Heart right ventricle (tissue), 16 donors: ENCODE measurements at regions of chr3 and their contacts with region 1.

Region 1: GRCh38 chr3:36993326-36994283 is at the start of gene MLH1:
- DNase-seq: peak; percentile 95 to 100
- ATAC-seq: peak; percentile 95 to 97 (median 96)
- H3K4me3 ChIP-seq: peak within 1 kb of the TSS; percentile 55 to 87 (median 72)
- H3K27ac ChIP-seq: peak within 1 kb of the TSS; percentile 89 to 99 (median 98)
- H3K4me1 ChIP-seq: peaks cover 2 to 64% (median 51%) of the 10 kb centered on the region in 9 donors
- H3K27me3 ChIP-seq: no peaks in the 10 kb centered on the region
- CTCF ChIP-seq: no peak
- total RNA-seq, gene MLH1: 48.8 to 61.7 (median 52.5) TPM

Region 2: DNA sequence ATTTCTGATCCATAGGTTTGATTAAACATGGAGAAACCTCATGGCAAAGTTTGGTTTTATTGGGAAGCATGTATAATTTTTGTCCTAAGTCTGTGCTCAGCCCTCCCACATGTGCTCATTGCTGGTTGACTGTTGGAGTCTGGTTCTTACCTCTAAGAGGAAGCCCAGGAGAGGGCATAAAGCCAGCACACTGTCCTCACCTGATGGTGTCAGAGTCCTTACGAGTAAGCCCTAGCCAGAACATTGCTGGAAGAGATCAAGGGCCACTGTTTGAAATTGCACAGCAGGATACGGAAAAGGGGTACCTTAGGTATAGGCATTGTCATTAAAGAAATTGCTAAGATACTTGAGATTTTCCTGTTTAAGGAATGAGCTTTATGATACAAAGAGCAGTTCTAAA is 21.0 kb after region 1 on chr3:
- intact Hi-C with region 1: loop called in 1 of 10 experiments (anchors 2 kb)
- DNase-seq: peak; percentile 71 to 81
- ATAC-seq: peak; percentile 62 to 84 (median 80)
- H3K4me3 ChIP-seq: no peak overlapping the region
- H3K27ac ChIP-seq: peak overlapping the region; percentile 42 to 95 (median 80)
- H3K4me1 ChIP-seq: peaks cover 0 to 44% (median 5%) of the 10 kb centered on the region in 9 donors
- H3K27me3 ChIP-seq: no peaks in the 10 kb centered on the region
- CTCF ChIP-seq: no peak

Region 3: GRCh38 chr3:37054370-37054769 is 60.8 kb after region 1 on chr3:
- intact Hi-C with region 1: loop called in 1 of 10 experiments (anchors 2 kb)
- DNase-seq: peak in 1 of 2 donors; percentile 42
- ATAC-seq: peak; percentile 86 to 94 (median 92)
- H3K4me3 ChIP-seq: peak overlapping the region in 3 of 10 donors; percentile 4 to 16 (median 11)
- H3K27ac ChIP-seq: peak overlapping the region; percentile 66 to 92 (median 84)
- H3K4me1 ChIP-seq: peaks cover 21 to 70% (median 50%) of the 10 kb centered on the region in 9 donors
- H3K27me3 ChIP-seq: no peaks in the 10 kb centered on the region
- CTCF ChIP-seq: no peak

Region 4: GRCh38 chr3:37174532-37175126 is 181.0 kb after region 1 on chr3 and contains the start of gene LRRFIP2:
- intact Hi-C with region 1: loop called in 1 of 10 experiments (anchors 5 kb)
- DNase-seq: no peak
- ATAC-seq: no peak
- H3K4me3 ChIP-seq: peak within 1 kb of the TSS; percentile 80 to 99 (median 96)
- H3K27ac ChIP-seq: peak within 1 kb of the TSS; percentile 92 to 98 (median 96)
- H3K4me1 ChIP-seq: peaks cover 0 to 81% (median 70%) of the 10 kb centered on the region in 9 donors
- H3K27me3 ChIP-seq: no peaks in the 10 kb centered on the region
- CTCF ChIP-seq: no peak
- total RNA-seq, gene LRRFIP2: 105 to 199 (median 127) TPM